ENCODE measurements at regions of chrX and their contacts with region 1.

Region 1: DNA sequence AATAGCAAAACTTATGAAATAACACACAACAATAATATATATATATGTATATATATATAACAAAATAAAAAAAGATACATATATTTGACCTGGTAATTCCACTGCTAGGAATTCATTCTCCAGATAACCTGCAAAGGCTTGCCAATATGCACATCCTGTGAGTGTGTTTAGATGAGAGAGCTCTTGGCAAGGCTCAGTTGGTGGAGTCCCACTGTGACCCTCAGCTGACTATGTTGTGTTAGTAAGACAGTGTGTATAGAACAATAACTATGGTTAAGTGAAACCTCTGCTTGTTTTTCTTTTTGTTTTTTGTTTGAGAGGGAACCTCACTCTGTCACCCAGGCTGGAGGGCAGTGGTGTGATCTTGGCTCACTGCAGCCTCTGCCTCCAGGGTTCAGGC is 39.5 kb upstream of the RBMX start:
- DNase-seq: no peak
- ATAC-seq: peak in 1 of 2 donors; percentile 85
- H3K4me3 ChIP-seq: no peak overlapping the region
- H3K27ac ChIP-seq: no peak overlapping the region
- H3K4me1 ChIP-seq: no peaks in the 10 kb centered on the region
- H3K27me3 ChIP-seq: no peaks in the 10 kb centered on the region

Region 2: DNA sequence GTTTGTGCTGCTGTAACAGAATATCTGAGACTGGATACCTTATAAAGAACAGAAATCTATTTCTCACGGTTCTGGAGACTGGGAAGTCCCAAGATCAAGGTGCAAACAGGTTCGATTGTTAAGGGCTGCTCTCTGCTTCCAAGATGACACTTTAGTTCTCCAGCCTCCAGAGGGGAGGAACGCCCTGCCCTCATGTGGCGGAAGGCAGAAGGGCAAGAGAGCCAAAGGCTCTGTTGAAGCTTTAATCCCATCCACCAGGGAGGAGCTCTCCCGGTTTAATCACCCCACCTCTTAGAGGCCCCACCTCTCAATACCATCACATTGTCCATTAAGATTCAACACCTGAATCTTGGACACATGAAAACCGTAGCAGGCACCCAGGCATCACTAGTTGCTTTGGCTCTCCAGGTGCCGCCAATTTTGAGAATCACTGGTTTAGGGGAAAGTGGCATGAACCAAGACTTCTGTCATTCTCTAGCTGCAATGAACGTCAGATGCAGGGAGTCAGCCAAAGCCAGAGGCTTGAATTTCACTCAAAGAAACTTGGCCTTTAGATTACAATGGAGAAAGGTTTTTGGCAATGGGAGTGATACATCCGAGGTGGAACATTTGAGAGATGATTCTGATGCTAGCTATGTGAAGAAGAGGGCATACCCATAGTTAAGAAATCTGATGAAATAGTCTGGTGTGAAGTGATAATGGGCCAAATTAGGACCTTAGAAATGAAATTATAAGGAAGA is 757.0 kb before region 1 on chrX:
- intact Hi-C with region 1: no loop called
- DNase-seq: peak; percentile 57 to 83 (median 78)
- ATAC-seq: peak; percentile 78 to 84
- H3K4me3 ChIP-seq: no peak overlapping the region
- H3K27ac ChIP-seq: peak overlapping the region; percentile 88
- H3K4me1 ChIP-seq: peaks cover 7% of the 10 kb centered on the region
- H3K27me3 ChIP-seq: no peaks in the 10 kb centered on the region

Region 3: GRCh38 chrX:136608295-136609171 is 311.5 kb before region 1 on chrX:
- intact Hi-C with region 1: loop called in 1 of 4 experiments (anchors 10 kb)
- DNase-seq: peak; percentile 23 to 69 (median 48)
- ATAC-seq: no peak
- H3K4me3 ChIP-seq: no peak overlapping the region
- H3K27ac ChIP-seq: no peak overlapping the region
- H3K4me1 ChIP-seq: no peaks in the 10 kb centered on the region
- H3K27me3 ChIP-seq: no peaks in the 10 kb centered on the region

Region 4: DNA sequence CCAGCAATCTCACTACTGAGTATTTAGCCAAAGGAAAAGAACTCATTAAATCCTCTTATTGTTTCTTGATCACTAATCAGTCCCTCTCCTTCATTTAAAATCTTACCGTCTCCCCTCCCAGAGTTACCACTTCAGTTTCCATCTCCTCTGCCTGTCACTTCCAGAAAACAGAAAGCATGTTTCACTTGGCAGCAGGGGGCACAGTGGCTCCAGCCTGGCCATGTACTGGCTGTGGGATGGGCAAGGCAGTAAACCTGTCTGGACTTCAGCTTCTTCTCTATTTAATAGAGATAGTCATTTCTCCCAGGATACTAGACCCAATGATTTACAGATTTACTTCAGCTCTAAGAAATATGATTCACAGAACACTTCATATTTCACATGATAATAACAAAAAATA is 208.9 kb before region 1 on chrX:
- intact Hi-C with region 1: loop called in 3 of 4 experiments (anchors 5 to 10 kb)
- DNase-seq: peak; percentile 16 to 67 (median 57)
- ATAC-seq: peak; percentile 70 to 79
- H3K4me3 ChIP-seq: no peak overlapping the region
- H3K27ac ChIP-seq: no peak overlapping the region
- H3K4me1 ChIP-seq: no peaks in the 10 kb centered on the region
- H3K27me3 ChIP-seq: no peaks in the 10 kb centered on the region

Region 5: GRCh38 chrX:136794080-136794479 is 125.9 kb before region 1 on chrX:
- intact Hi-C with region 1: no loop called
- DNase-seq: no peak
- ATAC-seq: no peak
- H3K4me3 ChIP-seq: no peak overlapping the region
- H3K27ac ChIP-seq: no peak overlapping the region
- H3K4me1 ChIP-seq: no peaks in the 10 kb centered on the region
- H3K27me3 ChIP-seq: no peaks in the 10 kb centered on the region

Measured in right cardiac atrium (tissue), 5 donors.